ENCODE measurements at regions of chr17 and their contacts with region 1.

Region 1: GRCh38 chr17:15944759-15945529 is at the start of gene ADORA2B:
- DNase-seq: peak; percentile 85
- H3K4me3 ChIP-seq: peak within 1 kb of the TSS; percentile 33 to 67 (median 56)
- H3K27ac ChIP-seq: peak within 1 kb of the TSS; percentile 70
- H3K4me1 ChIP-seq: peaks cover 26% of the 10 kb centered on the region
- H3K27me3 ChIP-seq: no peaks in the 10 kb centered on the region
- CTCF ChIP-seq: peak; percentile 68 to 71
- POLR2A ChIP-seq: peak; percentile 57
- total RNA-seq, gene ADORA2B: 6.5 and 9.8 TPM in 2 replicates

Region 2: GRCh38 chr17:15909481-15909991 is 35.4 kb before region 1 on chr17:
- CTCF ChIA-PET with region 1: no interaction called
- POLR2A ChIA-PET with region 1: no interaction called
- dilution Hi-C with region 1: no loop called
- intact Hi-C with region 1: no loop called
- DNase-seq: no peak
- H3K4me3 ChIP-seq: no peak overlapping the region
- H3K27ac ChIP-seq: no peak overlapping the region
- H3K4me1 ChIP-seq: peaks cover 3% of the 10 kb centered on the region
- H3K27me3 ChIP-seq: peaks cover 0 to 10% of the 10 kb centered on the region in 2 experiments
- CTCF ChIP-seq: no peak
- POLR2A ChIP-seq: no peak

Region 3: DNA sequence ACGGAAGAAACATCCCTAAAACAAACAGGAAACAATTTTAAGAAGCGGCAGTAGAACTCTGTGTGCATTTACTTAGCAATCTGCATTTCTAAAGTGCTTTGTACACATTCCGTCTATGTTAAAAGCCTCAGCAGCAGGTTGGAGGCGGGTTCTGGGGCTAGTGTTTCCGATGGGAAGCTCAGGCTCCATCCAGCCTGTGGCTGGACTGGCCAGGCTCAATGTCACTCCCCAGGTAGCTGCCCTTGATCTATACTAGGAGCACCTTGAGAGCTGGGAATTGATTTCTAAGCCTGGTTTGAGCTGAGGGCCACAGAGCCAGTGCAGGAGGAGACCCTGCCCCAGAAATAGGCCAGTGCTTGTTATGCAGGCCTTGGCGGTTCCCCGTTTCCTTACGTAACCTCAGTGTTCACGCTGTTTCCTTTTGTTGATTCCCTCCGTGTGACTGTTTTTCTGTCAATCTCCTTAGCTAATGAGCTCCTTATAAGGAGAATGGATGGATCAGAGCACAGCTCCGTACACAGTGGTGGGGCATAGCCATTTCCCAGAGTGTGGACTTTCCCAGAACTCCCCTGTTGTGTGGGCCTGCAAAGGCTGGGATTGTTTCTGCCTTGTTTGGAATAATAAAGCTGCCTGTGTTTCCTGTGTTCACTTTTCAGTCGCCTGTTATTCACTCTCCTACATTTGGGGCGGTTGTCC is 21.4 kb after region 1 on chr17:
- CTCF ChIA-PET with region 1: interaction called, 22 read pairs
- POLR2A ChIA-PET with region 1: no interaction called
- dilution Hi-C with region 1: no loop called
- intact Hi-C with region 1: loop called (anchors 2 kb)
- DNase-seq: peak; percentile 88
- H3K4me3 ChIP-seq: no peak overlapping the region
- H3K27ac ChIP-seq: peak overlapping the region; percentile 73
- H3K4me1 ChIP-seq: peaks cover 31% of the 10 kb centered on the region
- H3K27me3 ChIP-seq: no peaks in the 10 kb centered on the region
- CTCF ChIP-seq: no peak
- POLR2A ChIP-seq: no peak

Region 4: DNA sequence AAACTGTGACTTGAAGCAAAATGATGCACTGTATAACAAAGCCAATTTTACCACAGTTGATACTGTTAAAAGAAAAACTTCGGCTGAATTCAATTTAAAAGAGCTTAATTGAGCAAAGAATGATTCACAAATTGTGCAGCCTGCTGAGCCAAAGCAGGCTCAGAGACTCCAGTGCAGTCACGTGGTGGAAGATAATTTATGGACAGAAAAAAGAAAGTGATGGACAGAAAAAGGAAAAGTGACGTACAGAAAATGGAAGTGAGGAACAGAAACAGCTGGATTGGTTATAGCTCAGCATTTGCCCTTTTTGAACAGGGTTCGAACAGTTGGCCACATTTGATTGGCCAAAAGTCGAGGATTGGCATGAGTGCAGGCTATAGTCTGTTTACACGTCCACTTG is 28.9 kb after region 1 on chr17:
- CTCF ChIA-PET with region 1: interaction called, 17 read pairs
- POLR2A ChIA-PET with region 1: no interaction called
- dilution Hi-C with region 1: no loop called
- intact Hi-C with region 1: no loop called
- DNase-seq: no peak
- H3K4me3 ChIP-seq: no peak overlapping the region
- H3K27ac ChIP-seq: no peak overlapping the region
- H3K4me1 ChIP-seq: no peaks in the 10 kb centered on the region
- H3K27me3 ChIP-seq: no peaks in the 10 kb centered on the region
- CTCF ChIP-seq: no peak
- POLR2A ChIP-seq: no peak

Region 5: DNA sequence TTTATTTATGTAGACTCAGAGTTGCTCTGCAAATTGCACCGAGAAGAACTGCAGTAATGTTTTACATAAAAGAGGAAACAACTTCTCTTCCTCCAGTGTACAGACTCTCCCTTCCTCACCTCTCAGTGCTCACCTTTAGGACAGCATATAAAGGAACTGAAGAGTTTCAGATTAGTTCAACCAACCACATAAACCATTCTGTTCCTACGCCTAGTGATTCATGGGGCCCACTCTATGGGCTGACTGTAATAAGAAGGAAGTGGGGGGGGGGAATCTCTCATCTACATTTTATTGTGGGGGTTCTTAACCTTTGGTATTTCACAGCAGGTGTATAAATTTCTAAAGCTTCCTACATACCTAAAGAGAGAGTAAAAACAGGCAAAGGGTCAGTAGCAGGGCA is 36.3 kb after region 1 on chr17:
- CTCF ChIA-PET with region 1: interaction called, 17 read pairs
- POLR2A ChIA-PET with region 1: no interaction called
- dilution Hi-C with region 1: no loop called
- intact Hi-C with region 1: no loop called
- DNase-seq: no peak
- H3K4me3 ChIP-seq: no peak overlapping the region
- H3K27ac ChIP-seq: peak overlapping the region; percentile 57
- H3K4me1 ChIP-seq: peaks cover 22% of the 10 kb centered on the region
- H3K27me3 ChIP-seq: no peaks in the 10 kb centered on the region
- CTCF ChIP-seq: no peak
- POLR2A ChIP-seq: no peak

Region 6: GRCh38 chr17:15999439-16000350 is 54.8 kb after region 1 on chr17 and contains the starts of genes TTC19 and ZSWIM7:
- CTCF ChIA-PET with region 1: interaction called, 133 read pairs
- POLR2A ChIA-PET with region 1: interaction called, 7 read pairs
- dilution Hi-C with region 1: no loop called
- intact Hi-C with region 1: loop called (anchors 1 kb)
- DNase-seq: peak; percentile 96
- H3K4me3 ChIP-seq: peak within 1 kb of the TSS; percentile 67 to 96 (median 82)
- H3K27ac ChIP-seq: peak within 1 kb of the TSS; percentile 90
- H3K4me1 ChIP-seq: peaks cover 20% of the 10 kb centered on the region
- H3K27me3 ChIP-seq: no peaks in the 10 kb centered on the region
- CTCF ChIP-seq: no peak
- POLR2A ChIP-seq: peak; percentile 92
- total RNA-seq, gene TTC19: 32.8 and 33.3 TPM in 2 replicates
- total RNA-seq, gene ZSWIM7: 18.0 and 21.9 TPM in 2 replicates